IMR-90 (cell line): ENCODE measurements at regions of chr12 and their contacts with region 1.

Region 1: GRCh38 chr12:49763006-49763591 is 21.7 kb downstream of the TMBIM6 start:
- DNase-seq: peak; percentile 39
- ATAC-seq: peak; percentile 81
- H3K4me3 ChIP-seq: no peak overlapping the region
- H3K27ac ChIP-seq: no peak overlapping the region
- H3K4me1 ChIP-seq: no peaks in the 10 kb centered on the region
- H3K27me3 ChIP-seq: no peaks in the 10 kb centered on the region
- CTCF ChIP-seq: peak; percentile 62
- POLR2A ChIP-seq: no peak
- RAD21 ChIP-seq: peak; percentile 28; the same call in 1 of the 2 replicates

Region 2: DNA sequence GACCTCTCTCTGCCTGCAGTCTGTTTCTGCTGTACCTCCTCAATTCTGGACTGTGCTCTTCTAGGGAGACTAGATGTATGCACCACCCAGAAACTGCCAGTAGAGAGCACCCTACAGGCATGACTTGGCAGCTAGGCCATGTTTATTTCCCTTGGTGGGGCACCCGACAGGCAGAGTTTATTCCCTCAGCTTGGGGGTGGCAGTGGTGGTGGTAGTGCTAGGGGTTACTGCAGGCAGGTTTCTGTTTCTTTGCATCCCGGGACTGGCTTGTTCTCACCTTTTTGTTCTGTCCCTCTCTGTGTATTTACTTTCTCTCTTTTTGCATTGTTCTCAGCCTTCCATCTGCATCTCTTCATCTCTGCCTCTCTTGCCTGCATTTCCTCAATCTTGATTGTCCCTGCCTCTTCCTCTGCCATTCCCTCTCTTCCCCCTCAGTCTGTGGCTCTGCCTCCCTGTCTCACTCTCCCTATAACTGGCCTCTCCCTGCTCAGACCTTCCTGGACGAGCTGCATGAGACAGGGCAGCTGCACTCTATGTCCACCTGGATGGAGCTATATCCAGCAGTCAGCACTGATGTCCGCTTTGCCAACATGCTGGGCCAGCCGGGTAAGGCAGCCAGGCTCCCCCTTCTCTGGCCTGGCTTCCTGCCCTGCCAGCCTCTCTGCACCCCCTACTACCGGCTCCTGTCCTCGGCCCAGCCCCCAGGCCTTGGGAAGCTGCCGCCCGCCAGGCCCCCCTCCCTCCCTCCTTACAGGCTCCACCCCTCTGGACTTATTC is 125.9 kb before region 1 on chr12:
- CTCF ChIA-PET with region 1: no interaction called
- POLR2A ChIA-PET with region 1: no interaction called
- dilution Hi-C with region 1: no loop called
- in situ Hi-C with region 1: no loop called
- intact Hi-C with region 1: loop called (anchors 2 kb)
- DNase-seq: peak; percentile 68
- ATAC-seq: peak; percentile 95
- H3K4me3 ChIP-seq: no peak overlapping the region
- H3K27ac ChIP-seq: peak overlapping the region; percentile 18; the same call in 1 of the 2 replicates
- H3K4me1 ChIP-seq: peaks cover 5% of the 10 kb centered on the region; the same call in 1 of the 2 replicates
- H3K27me3 ChIP-seq: no peaks in the 10 kb centered on the region
- CTCF ChIP-seq: peak; percentile 79
- POLR2A ChIP-seq: no peak
- RAD21 ChIP-seq: peak; percentile 79